GM13976 (cell line): ENCODE measurements at regions of chr7 and their contacts with region 1.

Region 1: DNA sequence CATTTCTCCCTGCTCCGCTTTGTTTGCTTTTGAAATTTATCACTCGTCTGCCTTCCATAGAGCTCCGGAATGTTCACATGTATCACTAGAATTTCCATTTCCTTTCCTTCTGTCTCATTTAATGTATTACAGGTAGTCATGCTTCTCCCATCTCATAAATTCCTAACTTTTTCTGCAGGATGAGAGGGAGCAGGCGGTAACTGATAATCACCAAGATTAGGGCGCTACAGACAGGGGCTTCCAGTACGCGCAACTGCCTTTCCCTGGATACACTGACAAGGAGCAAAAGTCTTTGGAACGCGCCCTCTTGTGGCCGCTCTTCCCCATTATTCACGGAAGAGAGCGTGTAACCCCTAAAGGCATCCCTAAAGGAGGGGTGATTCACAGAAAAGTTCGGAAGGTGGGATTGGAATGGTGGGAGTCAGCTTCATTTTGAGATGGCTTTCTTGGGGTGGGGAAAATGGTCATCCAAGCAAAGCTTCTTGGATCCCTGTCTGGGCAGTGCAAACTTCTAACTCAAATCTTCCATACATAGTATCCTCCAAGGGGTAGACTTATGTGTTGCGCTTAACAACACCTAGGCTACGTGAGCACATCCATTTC is 6.5 kb downstream of the INHBA start:
- DNase-seq: peak; percentile 38
- CTCF ChIP-seq: peak; percentile 45

Region 2: DNA sequence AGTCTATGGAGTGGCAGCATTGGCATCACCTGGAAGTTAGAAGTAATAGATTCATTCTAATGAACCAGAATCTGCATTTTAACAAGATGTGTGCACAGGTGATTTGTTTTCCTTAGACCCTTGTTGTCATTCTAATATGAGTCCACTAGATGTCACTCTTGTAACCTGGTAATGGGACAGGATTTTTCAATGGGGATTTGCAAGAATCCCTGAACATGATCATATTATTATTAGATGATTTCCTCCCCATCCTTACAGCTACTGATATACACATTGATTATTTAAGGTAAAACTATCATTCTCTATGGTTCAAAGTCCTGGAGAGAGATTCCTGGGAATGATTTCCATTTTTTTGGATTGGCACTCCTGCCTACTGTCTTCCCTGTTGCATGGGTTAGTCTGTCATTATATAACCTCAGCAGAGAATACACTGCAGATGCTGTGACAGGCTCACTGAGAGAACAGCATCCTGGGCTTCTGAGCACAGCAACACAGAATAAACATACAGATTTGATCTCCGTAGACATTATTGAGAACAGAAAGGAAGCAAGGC is 1366.7 kb before region 1 on chr7:
- in situ Hi-C with region 1: loop called (anchors 25 kb)
- DNase-seq: peak; percentile 52
- CTCF ChIP-seq: peak; percentile 51